ENCODE measurements at regions of chr19 and their contacts with region 1.

Region 1: GRCh38 chr19:34974646-34975045 is 10.6 kb upstream of the ZNF792 start:
- DNase-seq: no peak
- ATAC-seq: no peak
- H3K4me3 ChIP-seq: peak overlapping the region in 1 of 2 donors; percentile 8
- H3K27ac ChIP-seq: peak overlapping the region in 1 of 2 donors; percentile 75
- H3K4me1 ChIP-seq: peaks cover 0 to 32% of the 10 kb centered on the region in 2 donors
- H3K27me3 ChIP-seq: no peaks in the 10 kb centered on the region
- CTCF ChIP-seq: no peak

Region 2: DNA sequence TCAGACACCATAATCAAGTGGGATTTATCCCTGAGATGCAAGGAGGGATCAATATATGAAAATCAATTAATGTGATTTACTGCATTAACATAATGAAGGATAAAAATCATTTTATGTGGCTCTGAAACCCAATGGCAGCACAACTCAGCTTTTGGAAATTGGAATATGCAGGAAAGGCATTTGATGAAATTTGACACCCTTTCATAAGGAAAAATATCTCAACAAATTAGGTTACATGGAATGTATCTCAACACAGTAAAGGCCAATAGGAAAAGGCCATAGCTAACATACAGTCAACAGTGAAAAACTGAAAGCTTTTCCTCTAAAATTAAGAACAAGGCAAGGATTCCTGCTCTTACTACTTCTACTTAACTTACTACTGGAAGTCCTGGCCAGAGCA is 79.9 kb before region 1 on chr19:
- intact Hi-C with region 1: no loop called
- DNase-seq: no peak
- ATAC-seq: no peak
- H3K4me3 ChIP-seq: no peak overlapping the region
- H3K27ac ChIP-seq: no peak overlapping the region
- H3K4me1 ChIP-seq: no peaks in the 10 kb centered on the region
- H3K27me3 ChIP-seq: no peaks in the 10 kb centered on the region
- CTCF ChIP-seq: no peak

Region 3: GRCh38 chr19:34904846-34905527 is 69.7 kb before region 1 on chr19:
- intact Hi-C with region 1: no loop called
- DNase-seq: peak in 1 of 4 donors; percentile 60
- ATAC-seq: no peak
- H3K4me3 ChIP-seq: no peak overlapping the region
- H3K27ac ChIP-seq: no peak overlapping the region
- H3K4me1 ChIP-seq: no peaks in the 10 kb centered on the region
- H3K27me3 ChIP-seq: peaks cover 27 to 52% of the 10 kb centered on the region in 2 donors
- CTCF ChIP-seq: no peak

Region 4: GRCh38 chr19:35013031-35013819 is 38.6 kb after region 1 on chr19:
- intact Hi-C with region 1: loop called in 1 of 2 experiments (anchors 5 kb)
- DNase-seq: peak; percentile 38 to 93 (median 74)
- ATAC-seq: peak; percentile 88
- H3K4me3 ChIP-seq: no peak overlapping the region
- H3K27ac ChIP-seq: peak overlapping the region in 1 of 2 donors; percentile 97
- H3K4me1 ChIP-seq: peaks cover 6 to 77% of the 10 kb centered on the region in 2 donors
- H3K27me3 ChIP-seq: no peaks in the 10 kb centered on the region
- CTCF ChIP-seq: peak; percentile 95 to 98

Measured in left lung (tissue), 14 donors.